ENCODE measurements at regions of chr3 and their contacts with region 1.

Region 1: DNA sequence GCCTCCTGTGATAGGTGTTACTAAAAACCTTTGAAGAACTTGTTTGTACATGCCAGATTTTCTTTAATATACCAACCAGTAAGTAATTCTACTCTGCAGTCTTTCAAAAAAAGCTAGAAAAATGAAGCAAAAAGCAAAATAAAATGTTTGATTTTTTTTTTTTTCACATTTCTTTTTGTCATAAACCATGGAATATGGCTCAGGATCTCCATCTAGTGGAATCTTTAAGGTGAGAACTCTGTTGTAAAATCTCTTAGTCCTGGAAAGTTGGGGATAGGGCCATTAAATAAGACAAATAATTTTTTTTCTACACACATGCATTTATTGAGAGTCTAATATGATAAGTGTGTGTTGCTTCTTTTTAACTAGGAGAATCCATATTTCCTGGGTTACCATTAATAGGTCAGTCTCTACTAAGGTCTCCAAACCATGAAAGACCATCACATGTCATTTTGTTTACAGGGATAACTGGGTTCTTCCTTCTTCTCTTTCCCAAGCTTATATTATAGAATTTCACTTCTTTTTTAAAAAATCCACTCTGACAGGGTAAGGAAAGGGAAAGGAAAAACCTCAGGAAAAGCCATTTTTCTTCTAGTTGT is 84.6 kb downstream of the SLC9A9 start:
- DNase-seq: peak; percentile 38
- H3K4me3 ChIP-seq: no peak overlapping the region
- H3K27ac ChIP-seq: no peak overlapping the region
- H3K4me1 ChIP-seq: no peaks in the 10 kb centered on the region
- H3K27me3 ChIP-seq: no peaks in the 10 kb centered on the region
- CTCF ChIP-seq: peak; percentile 18 to 22
- POLR2A ChIP-seq: no peak

Region 2: GRCh38 chr3:143040261-143040879 is 723.3 kb before region 1 on chr3:
- CTCF ChIA-PET with region 1: no interaction called
- POLR2A ChIA-PET with region 1: no interaction called
- dilution Hi-C with region 1: no loop called
- intact Hi-C with region 1: loop called (anchors 1 kb)
- DNase-seq: peak; percentile 37
- H3K4me3 ChIP-seq: no peak overlapping the region
- H3K27ac ChIP-seq: no peak overlapping the region
- H3K4me1 ChIP-seq: no peaks in the 10 kb centered on the region
- H3K27me3 ChIP-seq: no peaks in the 10 kb centered on the region
- CTCF ChIP-seq: peak; percentile 26 to 32
- POLR2A ChIP-seq: no peak

Region 3: DNA sequence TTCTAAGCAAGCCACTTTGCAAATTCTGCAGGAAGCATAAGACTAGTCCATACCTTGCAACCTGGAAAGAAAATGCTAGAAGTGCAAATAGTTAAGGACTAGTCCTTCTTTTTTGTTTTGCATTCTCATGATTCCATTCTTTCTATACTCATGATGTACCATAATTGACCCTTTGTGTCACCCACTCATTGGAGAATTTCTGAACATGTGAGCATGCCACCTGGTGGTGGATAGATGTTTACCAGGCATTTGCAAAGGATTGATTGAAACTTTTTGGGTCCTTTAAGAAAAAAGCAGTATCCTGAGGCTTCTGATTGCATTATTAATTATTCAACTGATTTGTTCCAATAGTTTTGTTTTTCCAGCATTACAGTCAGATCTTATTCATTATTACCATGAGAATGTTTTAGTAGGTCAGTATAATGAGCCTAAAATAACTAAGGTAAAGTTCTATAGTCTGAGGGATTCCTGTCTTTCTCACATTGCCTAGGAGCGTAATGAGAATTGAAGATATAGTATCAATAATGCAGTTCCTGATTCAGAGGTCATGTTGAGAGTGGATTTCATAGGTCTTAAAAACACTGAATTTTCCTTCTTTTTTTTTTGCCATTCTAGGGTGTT is 187.8 kb after region 1 on chr3:
- CTCF ChIA-PET with region 1: no interaction called
- POLR2A ChIA-PET with region 1: no interaction called
- dilution Hi-C with region 1: no loop called
- intact Hi-C with region 1: no loop called
- DNase-seq: peak; percentile 49
- H3K4me3 ChIP-seq: no peak overlapping the region
- H3K27ac ChIP-seq: no peak overlapping the region
- H3K4me1 ChIP-seq: no peaks in the 10 kb centered on the region
- H3K27me3 ChIP-seq: no peaks in the 10 kb centered on the region
- CTCF ChIP-seq: peak; percentile 42 to 54
- POLR2A ChIP-seq: no peak

Measured in endothelial cell of umbilical vein (primary cell).